Heart left ventricle (tissue), 16 donors: ENCODE measurements at regions of chr2 and their contacts with region 1.

Region 1: GRCh38 chr2:74876081-74876886 is 42.4 kb downstream of the HK2 start:
- DNase-seq: peak in 1 of 5 donors; percentile 28
- ATAC-seq: peak in 3 of 4 donors; percentile 50 to 75 (median 69)
- H3K4me3 ChIP-seq: no peak overlapping the region
- H3K27ac ChIP-seq: peak overlapping the region in 1 of 12 donors; percentile 79
- H3K4me1 ChIP-seq: peaks cover 0 to 34% (median 3%) of the 10 kb centered on the region in 12 donors
- H3K27me3 ChIP-seq: no peaks in the 10 kb centered on the region
- CTCF ChIP-seq: peak; percentile 56 to 80 (median 70)
- POLR2A ChIP-seq: no peak

Region 2: DNA sequence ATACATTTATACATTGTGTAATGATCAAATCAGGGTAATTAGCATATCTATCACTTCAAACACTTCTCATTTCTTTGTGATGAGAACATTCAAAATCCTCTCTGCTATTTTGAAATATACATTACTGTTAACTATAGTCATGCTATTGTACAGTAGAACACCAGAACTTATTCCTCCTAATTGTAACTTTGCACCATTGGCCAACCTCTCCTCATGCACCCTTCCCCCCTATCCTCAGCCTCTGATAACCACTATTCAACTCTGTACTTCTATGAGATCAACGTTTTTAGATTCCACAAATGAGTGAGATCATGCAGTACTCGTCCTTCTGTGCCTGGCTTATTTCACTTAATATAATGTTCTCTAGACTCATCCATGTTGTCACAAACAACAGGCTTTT is 267.3 kb before region 1 on chr2:
- intact Hi-C with region 1: no loop called
- DNase-seq: no peak
- ATAC-seq: no peak
- H3K4me3 ChIP-seq: no peak overlapping the region
- H3K27ac ChIP-seq: no peak overlapping the region
- H3K4me1 ChIP-seq: no peaks in the 10 kb centered on the region
- H3K27me3 ChIP-seq: peaks cover 0 to 40% (median 3%) of the 10 kb centered on the region in 9 donors
- CTCF ChIP-seq: no peak
- POLR2A ChIP-seq: no peak

Region 3: GRCh38 chr2:74690571-74690970 is 185.7 kb before region 1 on chr2:
- intact Hi-C with region 1: loop called in 9 of 10 experiments (anchors 1 to 5 kb)
- DNase-seq: no peak
- ATAC-seq: peak in 3 of 4 donors; percentile 73 to 86 (median 80)
- H3K4me3 ChIP-seq: no peak overlapping the region
- H3K27ac ChIP-seq: no peak overlapping the region
- H3K4me1 ChIP-seq: peaks cover 0 to 11% (median 0%) of the 10 kb centered on the region in 12 donors
- H3K27me3 ChIP-seq: peaks cover 0 to 8% (median 0%) of the 10 kb centered on the region in 9 donors
- CTCF ChIP-seq: peak; percentile 46 to 80 (median 63)
- POLR2A ChIP-seq: no peak

Region 4: DNA sequence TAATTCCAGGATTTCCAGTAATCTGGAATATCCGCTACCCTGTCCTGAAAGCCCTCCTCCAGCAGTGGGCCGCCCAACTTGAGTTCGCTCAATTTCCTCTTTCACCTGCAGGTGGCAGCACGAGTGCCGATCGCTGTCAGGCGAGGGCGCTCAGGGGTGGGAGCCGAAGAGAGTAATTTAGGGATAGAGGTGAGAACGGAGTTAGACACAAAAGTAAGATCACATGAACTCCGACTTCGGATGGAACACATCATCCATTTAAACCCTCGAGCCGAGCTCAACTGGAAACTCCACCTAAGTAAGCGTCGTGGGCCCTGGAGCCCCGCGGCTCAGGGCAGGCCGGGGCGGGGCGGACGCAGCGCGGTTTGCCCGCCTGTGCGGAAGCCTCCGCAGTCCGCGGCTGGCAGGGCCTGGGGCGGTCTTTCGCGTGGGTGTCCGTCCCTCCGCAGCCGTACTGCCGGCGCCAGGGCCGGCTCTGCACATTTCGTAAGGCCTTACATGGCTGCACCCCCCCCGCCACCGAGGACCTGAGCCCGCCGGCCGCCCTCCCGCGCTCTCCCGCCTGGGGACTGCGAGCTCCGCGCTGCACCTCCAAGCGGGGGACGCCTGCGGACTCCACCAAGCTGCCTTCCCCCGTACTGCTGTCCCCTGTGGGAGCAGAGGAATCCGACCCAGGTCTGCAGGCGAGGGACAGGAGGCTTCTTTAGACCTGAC is 161.0 kb before region 1 on chr2:
- intact Hi-C with region 1: loop called (anchors 1 to 2 kb)
- DNase-seq: peak; percentile 77 to 88 (median 81)
- ATAC-seq: peak; percentile 82 to 98 (median 94)
- H3K4me3 ChIP-seq: peak overlapping the region; percentile 27 to 65 (median 60)
- H3K27ac ChIP-seq: peak overlapping the region in 3 of 12 donors; percentile 46 to 76 (median 53)
- H3K4me1 ChIP-seq: peaks cover 0 to 11% (median 3%) of the 10 kb centered on the region in 12 donors
- H3K27me3 ChIP-seq: peaks cover 0 to 37% (median 4%) of the 10 kb centered on the region in 9 donors
- CTCF ChIP-seq: peak; percentile 79 to 94 (median 90)
- POLR2A ChIP-seq: no peak

Region 5: DNA sequence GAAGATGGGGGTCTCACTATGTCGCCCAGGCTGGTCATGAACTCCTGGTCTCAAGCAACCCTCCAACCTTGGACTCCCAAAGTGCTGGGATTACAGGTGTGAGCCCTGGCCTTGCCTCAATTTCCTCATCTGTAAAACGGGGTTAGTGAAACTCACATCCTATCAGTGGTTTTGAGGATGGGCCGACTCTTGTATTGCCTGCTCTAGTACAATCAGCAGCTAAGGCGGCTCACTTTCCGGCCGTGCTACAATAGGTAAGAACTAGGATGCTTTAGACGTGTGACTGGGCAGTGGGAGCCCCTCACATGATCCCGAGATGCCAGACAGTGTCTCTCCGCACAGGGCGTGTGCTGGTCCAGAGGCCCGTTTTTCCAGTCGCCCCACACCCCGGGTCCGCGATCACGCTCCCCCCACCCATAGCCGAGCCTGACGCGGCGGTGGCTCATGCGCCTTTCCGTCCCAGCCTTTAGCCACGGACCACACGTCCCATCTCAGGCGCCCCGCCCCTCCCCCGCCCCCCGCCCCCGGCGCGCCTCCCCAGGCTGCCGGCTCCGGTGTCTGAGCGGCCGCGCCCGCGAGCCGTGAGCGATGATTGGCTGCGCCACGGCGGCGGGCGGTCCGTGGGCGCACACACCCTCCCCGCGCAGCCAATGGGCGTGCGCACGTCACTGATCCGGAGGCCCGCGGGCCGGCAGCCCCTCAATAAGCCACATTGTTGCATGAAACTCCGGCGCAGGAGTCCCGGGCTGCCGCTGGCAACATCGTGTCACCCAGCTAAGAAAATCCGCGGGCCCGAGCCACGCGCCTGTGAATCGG is 42.7 kb before region 1 on chr2 and contains the start of gene HK2:
- intact Hi-C with region 1: loop called in 4 of 10 experiments (anchors 2 to 5 kb)
- DNase-seq: peak; percentile 83 to 93 (median 89)
- ATAC-seq: peak; percentile 90 to 97 (median 96)
- H3K4me3 ChIP-seq: peak within 1 kb of the TSS; percentile 38 to 83 (median 60)
- H3K27ac ChIP-seq: peak within 1 kb of the TSS in 10 of 12 donors; percentile 11 to 89 (median 54)
- H3K4me1 ChIP-seq: peaks cover 0 to 47% (median 12%) of the 10 kb centered on the region in 12 donors
- H3K27me3 ChIP-seq: peaks cover 0 to 19% (median 0%) of the 10 kb centered on the region in 9 donors
- CTCF ChIP-seq: no peak
- POLR2A ChIP-seq: peak; percentile 35 to 41
- total RNA-seq, gene HK2: 1.9 to 24.6 (median 16.3) TPM

Region 6: DNA sequence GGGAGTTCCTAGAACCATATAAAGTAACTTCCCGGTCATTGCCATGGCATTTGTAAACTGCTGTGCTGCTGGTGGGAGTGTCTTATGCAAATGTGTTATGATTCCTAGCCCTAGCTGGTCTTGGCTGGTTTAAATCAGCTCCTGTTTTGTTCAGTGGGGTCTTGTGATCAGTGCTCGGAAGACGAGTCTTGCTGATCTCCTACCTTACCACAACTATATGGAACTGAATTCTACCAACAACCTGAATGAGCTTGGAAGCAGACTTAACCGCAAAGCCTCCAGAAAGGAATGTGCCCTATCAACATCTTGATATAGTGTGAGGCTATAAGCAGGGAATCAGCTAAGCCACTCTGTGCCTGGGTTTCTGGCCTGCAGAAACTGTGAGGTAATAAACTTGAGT is 115.7 kb after region 1 on chr2:
- intact Hi-C with region 1: no loop called
- DNase-seq: no peak
- ATAC-seq: peak in 1 of 4 donors; percentile 36
- H3K4me3 ChIP-seq: no peak overlapping the region
- H3K27ac ChIP-seq: no peak overlapping the region
- H3K4me1 ChIP-seq: no peaks in the 10 kb centered on the region
- H3K27me3 ChIP-seq: no peaks in the 10 kb centered on the region
- CTCF ChIP-seq: no peak
- POLR2A ChIP-seq: no peak